AG04450 (cell line): ENCODE measurements at regions of chr16 and their contacts with region 1.

Region 1: GRCh38 chr16:89860747-89861304 is 12.6 kb upstream of the TCF25 start:
- DNase-seq: no peak
- H3K4me3 ChIP-seq: no peak overlapping the region
- H3K27ac ChIP-seq: no peak overlapping the region
- H3K27me3 ChIP-seq: no peaks in the 10 kb centered on the region
- CTCF ChIP-seq: peak; percentile 97

Region 2: DNA sequence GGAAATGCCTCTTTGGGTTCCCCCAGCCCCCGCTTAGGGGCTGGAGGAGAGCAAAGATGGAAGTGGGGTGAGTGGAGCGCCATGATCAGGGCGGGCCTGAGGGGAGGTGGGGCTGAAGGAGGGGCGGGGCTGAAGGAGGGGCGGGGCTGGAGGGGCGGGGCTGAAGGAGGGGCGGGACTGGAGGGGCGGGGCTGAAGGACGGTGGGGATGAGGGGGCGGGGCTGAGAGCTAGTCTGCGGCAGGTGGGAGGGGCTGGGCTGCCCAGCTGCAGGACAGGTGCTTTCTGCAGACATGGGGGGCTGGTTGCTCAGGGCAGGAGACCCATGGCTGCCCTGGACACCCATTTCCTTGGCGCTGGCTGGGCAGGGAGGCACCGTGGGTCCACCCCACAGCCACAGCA is 955.3 kb before region 1 on chr16:
- CTCF ChIA-PET with region 1: no interaction called
- POLR2A ChIA-PET with region 1: no interaction called
- DNase-seq: no peak
- H3K4me3 ChIP-seq: no peak overlapping the region
- H3K27ac ChIP-seq: no peak overlapping the region
- H3K27me3 ChIP-seq: peaks cover 26% of the 10 kb centered on the region
- CTCF ChIP-seq: no peak

Region 3: DNA sequence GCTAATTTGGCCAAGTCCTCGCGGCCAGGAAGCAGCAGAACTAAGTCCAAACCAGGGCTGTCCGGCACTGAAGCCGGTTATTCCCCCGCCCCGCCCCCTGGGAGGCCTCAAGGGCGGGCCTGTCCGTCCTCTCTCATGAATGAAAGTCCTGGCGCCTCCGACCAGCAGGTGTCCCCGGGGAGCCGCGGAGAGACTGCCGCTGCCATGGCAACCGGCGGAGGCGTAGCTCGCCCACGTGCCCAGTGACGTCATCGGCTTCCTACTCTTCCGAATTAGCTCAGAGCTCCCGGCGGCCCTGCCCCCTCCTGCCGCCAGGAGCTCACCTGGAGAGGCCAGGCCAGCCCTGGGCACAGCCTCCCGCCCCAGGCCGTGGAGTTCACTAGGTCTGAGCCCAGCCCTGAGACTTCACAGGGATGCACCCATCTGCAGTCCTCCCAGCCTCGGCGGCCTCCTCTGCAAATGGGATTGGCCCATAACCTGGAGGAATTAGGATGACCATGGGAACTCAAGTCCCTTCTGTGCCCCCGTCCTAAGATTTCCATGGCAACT is 160.7 kb before region 1 on chr16:
- CTCF ChIA-PET with region 1: interaction called, 42 read pairs
- POLR2A ChIA-PET with region 1: no interaction called
- DNase-seq: peak; percentile 94
- H3K4me3 ChIP-seq: peak overlapping the region; percentile 79
- H3K27ac ChIP-seq: peak overlapping the region; percentile 68
- H3K27me3 ChIP-seq: no peaks in the 10 kb centered on the region
- CTCF ChIP-seq: peak; percentile 76

Region 4: GRCh38 chr16:89749647-89750046 is 111.2 kb before region 1 on chr16:
- CTCF ChIA-PET with region 1: interaction called, 42 read pairs
- POLR2A ChIA-PET with region 1: no interaction called
- DNase-seq: no peak
- H3K4me3 ChIP-seq: no peak overlapping the region
- H3K27ac ChIP-seq: no peak overlapping the region
- H3K27me3 ChIP-seq: no peaks in the 10 kb centered on the region
- CTCF ChIP-seq: no peak

Region 5: DNA sequence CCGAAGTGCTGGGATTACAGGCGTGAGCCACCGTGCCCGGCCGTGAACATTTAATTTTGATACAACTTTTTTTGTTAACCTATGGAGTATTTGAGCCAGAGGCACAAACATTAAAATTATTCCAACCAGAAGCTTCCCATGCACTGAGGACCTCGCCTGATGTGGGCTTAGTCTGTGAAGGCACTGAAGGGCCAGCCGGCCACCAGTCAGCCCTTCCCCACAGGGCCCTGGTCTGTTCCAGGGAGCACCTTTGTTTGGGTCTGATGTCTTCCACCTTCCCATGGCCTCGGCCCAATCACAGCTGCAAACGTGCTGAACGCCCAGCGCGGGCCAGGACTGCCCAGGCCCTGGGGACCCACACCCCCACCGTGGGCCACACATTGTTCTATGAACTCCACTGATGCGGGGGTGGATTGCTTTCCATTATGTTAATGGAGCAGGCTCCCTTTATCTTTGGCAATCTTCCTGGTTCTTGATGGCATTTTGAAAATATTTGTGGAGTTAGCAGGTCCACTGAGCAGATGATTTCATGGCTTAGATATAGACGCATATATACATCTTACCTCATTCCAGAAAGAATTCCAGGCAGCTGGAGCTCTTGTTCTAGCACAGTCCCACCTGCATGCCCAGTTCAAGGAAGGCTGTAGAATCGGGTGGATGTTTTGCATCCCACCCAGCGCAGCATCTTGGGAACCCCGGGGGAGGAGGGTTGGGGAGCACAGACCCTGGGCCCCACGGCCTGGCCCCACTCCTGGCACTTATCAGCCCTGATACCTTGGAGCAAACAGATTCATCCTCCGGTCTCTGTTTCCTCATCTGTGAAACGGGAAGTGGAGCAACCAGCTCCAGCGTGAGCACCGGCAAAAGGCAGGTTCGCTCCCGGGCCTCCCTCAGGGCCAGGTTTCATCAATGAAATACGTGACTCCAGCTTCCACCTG is 18.1 kb before region 1 on chr16:
- CTCF ChIA-PET with region 1: interaction called, 13 read pairs
- POLR2A ChIA-PET with region 1: no interaction called
- DNase-seq: peak; percentile 29
- H3K4me3 ChIP-seq: no peak overlapping the region
- H3K27ac ChIP-seq: no peak overlapping the region
- H3K27me3 ChIP-seq: no peaks in the 10 kb centered on the region
- CTCF ChIP-seq: no peak

Region 6: DNA sequence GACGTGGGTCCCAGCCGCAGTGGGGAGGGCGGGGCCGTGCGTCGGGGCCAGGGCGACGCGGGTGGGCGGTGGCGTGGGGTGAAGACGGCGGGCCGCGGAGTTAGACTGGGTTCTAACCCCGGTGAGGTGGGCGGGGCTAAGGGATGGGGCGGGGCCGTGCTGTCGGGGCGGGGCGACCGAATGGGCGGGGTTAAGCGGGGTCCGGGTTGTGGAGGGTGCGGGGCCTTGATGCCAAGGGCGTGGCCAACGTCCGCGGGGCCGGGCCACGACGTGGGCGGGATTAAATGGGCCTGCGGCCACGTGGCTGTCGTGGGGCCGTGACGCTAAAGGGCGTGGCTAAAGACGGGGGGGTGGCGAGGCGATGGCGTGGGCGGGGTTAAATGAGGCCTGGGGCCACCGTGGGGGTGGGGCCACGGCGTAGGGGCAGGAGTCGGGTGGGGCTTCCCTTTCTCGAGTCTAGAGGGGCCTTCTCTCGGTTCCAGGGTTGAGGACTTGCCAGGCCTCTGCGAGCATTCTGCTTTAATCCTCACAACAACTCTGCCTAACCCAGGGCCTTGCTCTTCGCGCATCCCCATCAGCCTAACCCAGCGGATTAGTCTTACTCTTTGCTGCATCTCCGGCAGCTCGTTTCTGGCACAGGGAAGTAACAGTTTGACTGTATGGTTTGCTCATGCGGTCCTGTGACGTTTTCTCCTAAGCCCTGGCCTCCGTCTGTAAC is 13.3 kb after region 1 on chr16:
- CTCF ChIA-PET with region 1: interaction called, 5 read pairs
- POLR2A ChIA-PET with region 1: interaction called, 16 read pairs
- DNase-seq: peak; percentile 94
- H3K4me3 ChIP-seq: peak overlapping the region; percentile 92
- H3K27ac ChIP-seq: peak overlapping the region; percentile 73
- H3K27me3 ChIP-seq: no peaks in the 10 kb centered on the region
- CTCF ChIP-seq: no peak